CD14-positive monocyte (primary cell): ENCODE measurements at regions of chr3 and their contacts with region 1.

Region 1: GRCh38 chr3:113057117-113057516 is 66.3 kb downstream of the GTPBP8 start:
- DNase-seq: no peak
- H3K4me3 ChIP-seq: no peak overlapping the region
- H3K4me3 Mint-ChIP-seq: no peak overlapping the region
- H3K27ac ChIP-seq: no peak overlapping the region
- H3K27ac Mint-ChIP-seq: peak overlapping the region in 1 of 7 donors; percentile 65
- H3K4me1 ChIP-seq: peaks cover 56 to 58% of the 10 kb centered on the region in 2 donors
- H3K4me1 Mint-ChIP-seq: no peaks in the 10 kb centered on the region
- H3K27me3 ChIP-seq: no peaks in the 10 kb centered on the region
- H3K27me3 Mint-ChIP-seq: peaks cover 0 to 2% (median 0%) of the 10 kb centered on the region in 3 donors
- CTCF ChIP-seq: no peak

Region 2: DNA sequence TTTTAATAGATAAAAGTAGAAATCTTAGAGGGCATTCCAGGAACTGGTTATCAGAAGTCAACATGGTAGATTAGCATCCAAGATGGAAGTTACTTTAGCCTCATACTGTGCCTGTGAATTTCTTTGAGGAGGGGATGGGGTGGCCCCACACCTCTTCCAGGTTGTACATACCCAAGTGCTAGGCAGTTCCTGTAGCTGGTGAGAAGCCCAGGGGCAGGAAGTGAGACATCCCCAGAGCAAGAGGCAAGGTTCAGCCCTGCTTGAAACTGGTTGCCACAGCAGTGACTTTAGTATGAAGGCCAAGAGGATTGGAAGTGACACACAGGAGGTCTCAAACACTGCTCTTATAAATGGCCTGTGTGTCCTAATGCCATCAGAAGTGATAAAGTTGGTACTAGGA is 54.4 kb before region 1 on chr3:
- intact Hi-C with region 1: no loop called
- DNase-seq: no peak
- H3K4me3 ChIP-seq: no peak overlapping the region
- H3K4me3 Mint-ChIP-seq: no peak overlapping the region
- H3K27ac ChIP-seq: no peak overlapping the region
- H3K27ac Mint-ChIP-seq: peak overlapping the region in 1 of 7 donors; percentile 48
- H3K4me1 ChIP-seq: no peaks in the 10 kb centered on the region
- H3K4me1 Mint-ChIP-seq: peaks cover 3% of the 10 kb centered on the region
- H3K27me3 ChIP-seq: no peaks in the 10 kb centered on the region
- H3K27me3 Mint-ChIP-seq: peaks cover 0 to 1% (median 0%) of the 10 kb centered on the region in 3 donors
- CTCF ChIP-seq: no peak

Region 3: DNA sequence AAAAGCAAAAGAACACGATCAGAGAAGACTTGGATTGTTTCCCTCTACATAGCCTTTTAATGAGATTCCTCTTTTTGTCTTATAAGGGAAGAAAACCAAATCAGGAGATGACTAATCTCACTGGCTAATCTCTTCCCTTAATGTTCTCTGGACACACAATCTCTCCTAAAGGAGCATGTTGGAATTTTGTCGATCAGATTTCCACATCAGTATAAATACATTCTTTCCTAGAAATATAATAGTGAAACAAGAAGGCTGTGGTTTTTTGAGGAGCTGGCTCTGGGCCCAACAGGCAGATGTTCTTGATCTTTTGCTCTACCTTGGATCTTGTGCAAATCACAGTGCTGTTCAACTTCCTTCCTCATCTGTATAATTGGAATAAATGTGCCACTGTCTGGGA is 27.7 kb after region 1 on chr3:
- intact Hi-C with region 1: no loop called
- DNase-seq: peak in 2 of 3 donors; percentile 20 to 31
- H3K4me3 ChIP-seq: no peak overlapping the region
- H3K4me3 Mint-ChIP-seq: peak overlapping the region in 1 of 2 donors; percentile 62
- H3K27ac ChIP-seq: no peak overlapping the region
- H3K27ac Mint-ChIP-seq: peak overlapping the region in 1 of 7 donors; percentile 33
- H3K4me1 ChIP-seq: peaks cover 15 to 18% of the 10 kb centered on the region in 2 donors
- H3K4me1 Mint-ChIP-seq: peaks cover 20% of the 10 kb centered on the region
- H3K27me3 ChIP-seq: no peaks in the 10 kb centered on the region
- H3K27me3 Mint-ChIP-seq: peaks cover 3 to 10% (median 6%) of the 10 kb centered on the region in 3 donors
- CTCF ChIP-seq: no peak

Region 4: DNA sequence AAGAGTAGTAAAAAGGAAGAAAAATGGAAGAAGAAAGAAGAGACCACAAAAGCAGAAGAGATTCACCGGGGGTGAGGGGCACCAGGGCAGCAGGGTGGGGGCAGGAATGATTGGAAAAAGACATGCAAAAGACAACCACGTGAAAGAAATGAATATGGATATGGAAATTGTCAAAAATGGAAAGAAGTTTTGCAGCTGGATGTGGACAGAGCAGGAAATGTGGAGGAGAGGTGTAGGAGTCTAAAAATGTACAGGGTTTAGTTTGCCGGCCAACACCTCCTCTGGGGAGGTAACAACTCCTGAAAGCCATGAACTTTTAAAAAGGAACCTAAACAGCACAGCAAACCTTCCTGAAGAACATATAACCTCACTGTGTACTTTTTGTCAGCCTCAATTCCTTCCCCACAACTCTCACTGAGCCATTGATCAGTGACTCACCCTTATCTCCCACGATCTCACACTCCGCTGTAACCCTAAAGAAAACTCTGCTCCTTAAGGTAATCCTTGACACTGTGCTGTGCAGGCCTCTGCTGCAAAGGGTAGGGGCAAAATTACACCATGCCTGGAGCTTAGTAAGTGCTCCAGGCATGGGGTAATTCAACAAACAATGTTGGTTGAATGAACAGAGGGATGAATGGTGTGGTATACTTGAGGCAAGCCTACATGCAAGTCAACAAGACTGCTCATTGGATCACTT is 54.0 kb after region 1 on chr3:
- intact Hi-C with region 1: no loop called
- DNase-seq: no peak
- H3K4me3 ChIP-seq: no peak overlapping the region
- H3K4me3 Mint-ChIP-seq: no peak overlapping the region
- H3K27ac ChIP-seq: no peak overlapping the region
- H3K27ac Mint-ChIP-seq: no peak overlapping the region
- H3K4me1 ChIP-seq: no peaks in the 10 kb centered on the region
- H3K4me1 Mint-ChIP-seq: no peaks in the 10 kb centered on the region
- H3K27me3 ChIP-seq: no peaks in the 10 kb centered on the region
- H3K27me3 Mint-ChIP-seq: peaks cover 0 to 5% (median 4%) of the 10 kb centered on the region in 3 donors
- CTCF ChIP-seq: no peak

Region 5: DNA sequence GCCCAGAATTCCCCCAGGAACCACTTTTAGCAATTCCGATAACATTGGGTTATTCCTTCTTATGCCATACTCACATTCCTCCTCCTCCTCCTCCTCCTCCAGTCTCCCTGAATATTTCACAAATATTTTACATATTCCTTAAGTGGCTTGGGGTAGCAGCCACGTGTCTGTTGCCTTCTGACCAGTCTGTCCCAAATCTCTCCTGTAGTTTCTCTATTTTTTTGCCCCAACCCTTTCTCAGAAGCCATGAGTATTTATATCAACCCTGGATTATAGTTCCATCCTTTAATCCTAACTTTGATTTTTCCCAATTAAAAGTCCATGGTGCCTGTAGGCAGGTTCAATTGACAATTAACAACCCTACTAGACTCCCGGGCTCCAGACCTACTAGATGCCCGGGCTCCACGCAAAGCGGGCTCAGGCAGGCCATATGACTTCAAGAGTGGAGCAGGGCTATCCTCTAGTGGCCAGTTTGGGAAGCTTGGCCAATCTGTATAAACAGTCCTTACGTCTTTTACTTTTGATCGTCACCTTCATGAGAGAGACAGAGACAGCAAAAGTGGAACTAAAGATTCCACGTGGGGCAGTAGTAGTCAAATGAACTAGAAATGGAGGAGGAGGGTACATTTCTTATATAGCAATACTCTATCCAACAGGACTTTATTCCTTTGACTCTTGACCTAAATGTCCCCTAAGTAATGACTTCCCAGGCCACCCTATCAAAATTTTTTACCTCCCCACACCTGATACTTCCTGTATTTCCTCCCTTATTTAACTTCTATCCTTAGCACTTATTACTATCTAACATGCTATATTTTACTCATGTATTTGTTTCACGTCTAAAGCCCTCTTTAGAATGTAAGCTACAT is 569.6 kb after region 1 on chr3:
- intact Hi-C with region 1: loop called (anchors 5 kb)
- DNase-seq: peak; percentile 64 to 82 (median 76)
- H3K4me3 ChIP-seq: peak overlapping the region in 2 of 3 experiments; percentile 14 to 68
- H3K4me3 Mint-ChIP-seq: peak overlapping the region; percentile 75 to 89
- H3K27ac ChIP-seq: peak overlapping the region in 1 of 2 donors; percentile 77
- H3K27ac Mint-ChIP-seq: peak overlapping the region; percentile 89 to 94 (median 93)
- H3K4me1 ChIP-seq: peaks cover 23 to 34% of the 10 kb centered on the region in 2 donors
- H3K4me1 Mint-ChIP-seq: peaks cover 38% of the 10 kb centered on the region
- H3K27me3 ChIP-seq: no peaks in the 10 kb centered on the region
- H3K27me3 Mint-ChIP-seq: peaks cover 0 to 4% (median 1%) of the 10 kb centered on the region in 3 donors
- CTCF ChIP-seq: peak; percentile 95